Naive thymus-derived CD4-positive, alpha-beta T cell (primary cell): ENCODE measurements at regions of chr1 and their contacts with region 1.

Region 1: DNA sequence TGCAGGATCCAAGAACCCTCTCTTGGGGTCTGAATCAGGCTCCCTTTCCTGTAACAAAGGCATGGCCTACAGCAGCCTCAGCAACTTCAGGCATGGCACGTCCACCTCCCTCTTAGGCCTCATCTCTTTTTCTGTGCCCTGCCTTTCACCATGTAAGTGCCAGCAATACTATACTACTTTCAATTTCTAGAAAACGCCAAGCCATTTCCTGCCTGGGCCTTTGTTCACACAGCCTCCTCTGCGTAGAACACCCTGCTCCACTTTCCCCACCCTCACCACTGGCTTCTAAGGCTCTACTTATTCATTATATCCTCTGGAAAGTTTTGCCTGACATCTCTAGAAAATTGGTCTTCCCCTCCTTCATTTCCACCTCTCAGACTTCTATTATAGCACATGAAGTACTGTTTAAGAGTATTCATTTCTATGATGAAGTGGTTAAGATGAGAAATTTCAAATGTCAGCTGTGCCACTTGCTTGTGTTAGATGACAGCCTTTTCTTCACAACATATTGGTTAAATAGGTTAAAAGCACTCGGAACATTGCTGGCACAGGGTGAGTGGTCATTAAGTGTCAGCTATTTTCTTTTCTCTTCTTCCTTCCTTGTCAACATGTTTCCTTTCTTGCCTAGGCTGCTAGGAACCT is 41.6 kb upstream of the VWA5B1 start:
- DNase-seq: peak in 7 of 9 donors; percentile 22 to 59 (median 47)
- ATAC-seq: peak; percentile 82
- H3K4me3 ChIP-seq: peak overlapping the region; percentile 47
- H3K4me3 Mint-ChIP-seq: peak overlapping the region; percentile 65 to 83 (median 80)
- H3K27ac ChIP-seq: peak overlapping the region; percentile 58
- H3K27ac Mint-ChIP-seq: peak overlapping the region; percentile 89 to 100 (median 95)
- H3K4me1 ChIP-seq: peaks cover 0 to 24% of the 10 kb centered on the region in 2 donors
- H3K4me1 Mint-ChIP-seq: peaks cover 5 to 27% (median 21%) of the 10 kb centered on the region in 7 donors
- H3K27me3 ChIP-seq: no peaks in the 10 kb centered on the region
- H3K27me3 Mint-ChIP-seq: peaks cover 0 to 14% (median 0%) of the 10 kb centered on the region in 5 donors

Region 2: DNA sequence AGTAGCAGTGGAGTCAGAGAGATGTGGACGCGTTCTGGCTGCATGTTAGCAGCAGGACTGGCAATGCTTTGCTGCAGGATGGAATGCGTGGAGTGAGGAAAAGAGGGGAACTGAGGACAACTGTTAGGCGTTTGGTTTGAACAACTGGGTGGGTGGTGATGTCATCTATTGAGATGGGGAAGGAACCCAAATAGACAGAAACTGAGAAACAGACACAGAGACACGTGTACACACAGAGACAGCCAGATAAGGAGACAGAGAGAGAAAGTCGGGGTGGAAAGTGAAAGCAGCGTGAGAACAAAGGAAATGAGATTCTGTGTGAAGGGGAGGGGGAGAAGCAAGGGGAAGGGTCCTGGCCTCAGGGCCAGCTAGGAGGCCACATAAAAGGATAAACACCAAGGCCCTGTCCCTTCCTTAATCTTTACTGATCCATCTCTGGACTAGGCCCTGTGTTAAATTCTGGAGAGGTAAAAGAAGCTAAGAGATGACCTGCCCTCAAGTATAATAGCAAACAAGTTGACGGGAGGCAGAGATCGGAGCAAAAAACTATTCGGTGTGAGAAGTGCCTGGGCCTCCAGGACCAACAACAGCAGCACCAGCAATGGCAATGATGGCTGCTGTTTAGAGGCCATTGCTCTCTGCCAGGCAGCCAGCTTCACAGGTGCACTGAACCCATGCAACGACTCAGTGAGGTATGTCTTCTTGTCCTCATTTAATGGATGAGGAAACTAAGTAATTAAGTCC is 73.2 kb after region 1 on chr1:
- CTCF ChIA-PET with region 1: no interaction called
- POLR2A ChIA-PET with region 1: no interaction called
- intact Hi-C with region 1: loop called in 1 of 2 experiments (anchors 2 kb)
- DNase-seq: peak in 5 of 9 donors; percentile 6 to 32 (median 20)
- ATAC-seq: peak; percentile 36
- H3K4me3 ChIP-seq: peak overlapping the region; percentile 57
- H3K4me3 Mint-ChIP-seq: peak overlapping the region; percentile 21 to 86 (median 77)
- H3K27ac ChIP-seq: peak overlapping the region; percentile 61
- H3K27ac Mint-ChIP-seq: peak overlapping the region; percentile 46 to 94 (median 84)
- H3K4me1 ChIP-seq: peaks cover 0 to 16% of the 10 kb centered on the region in 2 donors
- H3K4me1 Mint-ChIP-seq: peaks cover 17 to 33% (median 28%) of the 10 kb centered on the region in 7 donors
- H3K27me3 ChIP-seq: no peaks in the 10 kb centered on the region
- H3K27me3 Mint-ChIP-seq: peaks cover 2 to 20% (median 4%) of the 10 kb centered on the region in 5 donors